HCT116 (cell line): ENCODE measurements at regions of chr9 and their contacts with region 1.

Region 1: GRCh38 chr9:107489687-107490605 is at the start of gene KLF4:
- DNase-seq: peak; percentile 86
- ATAC-seq: peak; percentile 77
- H3K4me3 ChIP-seq: peak within 1 kb of the TSS; percentile 75 to 92
- H3K27ac ChIP-seq: peak within 1 kb of the TSS; percentile 74
- H3K4me1 ChIP-seq: peaks cover 0 to 40% of the 10 kb centered on the region in 2 experiments; a peak in 3 of 4 replicates
- H3K27me3 ChIP-seq: no peaks in the 10 kb centered on the region
- CTCF ChIP-seq: no peak
- POLR2A ChIP-seq: peak; percentile 41
- RAD21 ChIP-seq: no peak
- total RNA-seq, gene KLF4: 92.8 TPM

Region 2: GRCh38 chr9:107170801-107171200 is 319.1 kb before region 1 on chr9:
- CTCF ChIA-PET with region 1: no interaction called
- POLR2A ChIA-PET with region 1: no interaction called
- RAD21 ChIA-PET with region 1: no interaction called
- intact Hi-C with region 1: no loop called
- DNase-seq: no peak
- ATAC-seq: no peak
- H3K4me3 ChIP-seq: no peak overlapping the region
- H3K27ac ChIP-seq: no peak overlapping the region
- H3K4me1 ChIP-seq: peaks cover 0 to 39% of the 10 kb centered on the region in 2 experiments; a peak in 3 of 4 replicates
- H3K27me3 ChIP-seq: no peaks in the 10 kb centered on the region
- CTCF ChIP-seq: no peak
- POLR2A ChIP-seq: no peak
- RAD21 ChIP-seq: no peak

Region 3: DNA sequence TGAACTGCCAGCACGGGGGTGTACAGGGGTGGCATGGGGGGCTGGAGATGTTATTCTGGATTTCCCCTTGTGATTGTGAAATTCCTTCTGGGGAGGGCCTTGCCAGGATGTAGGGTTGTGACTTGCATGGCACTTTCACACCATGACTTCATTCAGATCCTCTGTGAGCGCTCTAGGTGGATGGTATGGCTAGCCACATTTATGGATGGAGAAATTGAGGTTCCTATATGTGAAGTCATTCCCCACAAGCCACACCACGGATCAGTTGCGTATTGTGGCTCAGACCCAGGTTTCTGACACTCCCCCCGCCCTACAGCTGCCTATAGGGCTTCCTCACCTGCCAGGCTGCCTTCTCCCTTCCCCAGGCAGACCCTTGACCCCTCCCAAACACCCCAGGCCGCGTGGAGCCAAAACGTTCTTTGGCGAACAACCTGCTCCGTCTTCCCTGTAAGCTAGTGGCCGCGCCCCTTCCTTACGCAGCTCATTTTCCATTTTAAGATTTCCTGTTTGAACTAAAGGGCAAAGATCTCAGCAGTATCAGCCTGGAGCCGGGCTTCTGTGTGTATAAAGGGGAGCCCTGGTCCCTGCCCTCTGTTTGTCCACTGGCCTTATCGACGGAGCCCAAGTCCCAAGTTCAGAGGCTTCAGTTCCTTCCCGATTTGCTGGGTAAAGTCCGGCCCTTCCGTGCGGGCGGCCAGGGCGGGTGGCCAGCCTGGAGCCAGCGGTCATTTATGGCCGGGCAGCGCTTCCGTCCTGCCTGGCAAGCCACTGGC is 97.4 kb after region 1 on chr9:
- CTCF ChIA-PET with region 1: no interaction called
- POLR2A ChIA-PET with region 1: no interaction called
- RAD21 ChIA-PET with region 1: no interaction called
- intact Hi-C with region 1: no loop called
- DNase-seq: no peak
- ATAC-seq: no peak
- H3K4me3 ChIP-seq: no peak overlapping the region
- H3K27ac ChIP-seq: no peak overlapping the region
- H3K4me1 ChIP-seq: peaks cover 3 to 11% of the 10 kb centered on the region in 2 experiments; a peak in 1 of 4 replicates
- H3K27me3 ChIP-seq: no peaks in the 10 kb centered on the region
- CTCF ChIP-seq: no peak
- POLR2A ChIP-seq: no peak
- RAD21 ChIP-seq: no peak

Region 4: GRCh38 chr9:107866711-107867311 is 376.9 kb after region 1 on chr9:
- CTCF ChIA-PET with region 1: no interaction called
- POLR2A ChIA-PET with region 1: no interaction called
- RAD21 ChIA-PET with region 1: no interaction called
- intact Hi-C with region 1: loop called (anchors 10 kb)
- DNase-seq: no peak
- ATAC-seq: no peak
- H3K4me3 ChIP-seq: no peak overlapping the region
- H3K27ac ChIP-seq: no peak overlapping the region
- H3K4me1 ChIP-seq: no peaks in the 10 kb centered on the region
- H3K27me3 ChIP-seq: no peaks in the 10 kb centered on the region
- CTCF ChIP-seq: no peak
- POLR2A ChIP-seq: no peak
- RAD21 ChIP-seq: no peak

Region 5: DNA sequence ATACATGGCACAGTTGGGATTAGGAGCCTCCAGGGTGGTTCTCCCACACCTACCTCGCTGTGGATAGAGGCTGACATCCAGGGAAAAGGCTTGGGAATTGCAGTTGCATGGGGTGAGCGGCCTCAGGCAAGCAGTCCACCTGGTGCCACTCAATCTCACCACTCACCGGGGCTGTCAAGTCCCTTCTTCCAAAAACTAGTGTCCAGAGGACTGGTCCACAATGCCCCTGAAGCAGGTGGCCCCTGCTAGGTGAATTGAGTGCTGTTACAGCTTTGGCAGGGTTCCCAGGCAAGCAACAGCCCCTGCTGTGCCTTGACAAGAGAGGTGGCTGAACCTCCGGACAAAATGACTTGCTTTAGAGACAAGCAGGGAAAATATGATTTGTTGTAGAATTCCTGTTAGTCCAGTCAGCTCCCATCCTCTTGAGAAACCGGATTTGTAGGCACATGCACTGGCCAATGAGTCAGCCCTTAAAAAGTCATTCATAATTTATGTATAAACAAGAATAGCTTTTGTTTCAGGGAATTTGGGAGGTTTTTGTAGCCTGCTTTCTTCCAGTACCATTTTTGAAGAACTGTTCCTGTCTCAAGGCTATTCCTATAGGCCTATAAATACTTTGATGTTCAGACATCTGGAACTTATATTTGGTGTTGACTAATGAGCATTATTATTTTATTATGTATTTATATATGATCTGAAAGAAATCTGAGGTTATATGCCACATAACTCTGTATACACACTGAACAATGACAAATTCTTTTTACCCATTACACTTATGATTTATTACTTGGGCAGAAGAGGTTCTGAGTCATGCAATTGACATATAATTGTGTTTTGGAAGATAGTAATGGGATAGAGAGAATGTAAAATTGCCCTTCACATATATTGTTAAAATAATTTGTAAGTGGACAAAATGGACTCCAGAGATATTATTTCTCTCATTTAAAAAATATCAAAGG is 954.7 kb after region 1 on chr9:
- CTCF ChIA-PET with region 1: no interaction called
- POLR2A ChIA-PET with region 1: no interaction called
- RAD21 ChIA-PET with region 1: no interaction called
- intact Hi-C with region 1: loop called (anchors 10 kb)
- DNase-seq: peak; percentile 90
- ATAC-seq: peak; percentile 85
- H3K4me3 ChIP-seq: peak overlapping the region in 1 of 2 experiments; percentile 28; a peak in 2 of 4 replicates
- H3K27ac ChIP-seq: peak overlapping the region; percentile 36
- H3K4me1 ChIP-seq: peaks cover 29 to 36% of the 10 kb centered on the region in 2 experiments
- H3K27me3 ChIP-seq: no peaks in the 10 kb centered on the region
- CTCF ChIP-seq: no peak
- POLR2A ChIP-seq: no peak
- RAD21 ChIP-seq: no peak